Heart left ventricle (tissue), 16 donors: ENCODE measurements at regions of chrX and their contacts with region 1.

Region 1: GRCh38 chrX:120629667-120630537 is at the start of gene C1GALT1C1:
- DNase-seq: peak; percentile 91 to 96 (median 95)
- ATAC-seq: peak; percentile 98 to 99 (median 98)
- H3K4me3 ChIP-seq: peak within 1 kb of the TSS in 11 of 12 donors; percentile 58 to 89 (median 72)
- H3K27ac ChIP-seq: peak within 1 kb of the TSS; percentile 78 to 93 (median 88)
- H3K4me1 ChIP-seq: peaks cover 0 to 20% (median 2%) of the 10 kb centered on the region in 12 donors
- H3K27me3 ChIP-seq: no peaks in the 10 kb centered on the region
- CTCF ChIP-seq: no peak
- POLR2A ChIP-seq: peak in 1 of 2 donors; percentile 70
- total RNA-seq, gene C1GALT1C1: 14.7 to 25.5 (median 18.5) TPM

Region 2: DNA sequence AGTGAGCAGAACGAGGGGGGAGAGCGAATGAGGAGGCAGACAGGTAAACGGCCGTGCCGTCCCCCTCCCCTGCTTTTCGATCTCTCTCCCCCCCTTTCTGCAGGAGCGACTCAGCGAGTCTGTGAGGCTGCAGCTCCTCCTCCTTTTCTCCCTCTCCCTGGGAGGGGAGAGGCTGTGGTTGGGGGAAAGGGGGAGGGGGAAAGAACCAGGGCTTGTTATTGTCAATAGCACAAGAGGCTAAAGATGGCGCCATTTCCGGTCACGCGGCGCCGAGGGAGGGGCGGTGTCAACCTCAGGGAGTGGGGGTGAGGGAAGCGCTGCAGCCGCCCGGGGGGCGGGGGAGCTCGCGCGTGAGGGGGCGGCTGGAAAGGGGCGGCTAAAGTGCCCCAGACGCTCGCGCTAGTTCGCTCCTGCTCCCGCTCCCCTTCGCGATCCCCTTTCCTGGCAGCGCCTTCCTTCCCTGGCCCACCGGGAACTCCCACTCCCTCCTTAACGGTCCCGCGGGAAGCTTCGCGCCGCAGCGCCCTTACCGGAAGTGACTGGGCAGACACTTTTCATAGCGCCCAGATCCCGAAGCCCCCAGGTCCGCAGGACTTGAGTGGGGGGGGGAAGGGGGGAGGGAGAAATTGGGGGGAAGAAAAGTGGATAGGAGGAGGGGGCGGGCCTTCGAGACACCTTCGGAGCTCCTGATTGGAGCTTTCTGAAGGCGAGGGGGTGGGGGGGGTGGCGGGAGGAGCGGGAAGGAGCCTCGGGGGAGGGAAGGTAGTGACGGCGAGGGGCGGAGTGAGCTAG is 68.9 kb before region 1 on chrX and contains the start of gene CUL4B:
- intact Hi-C with region 1: loop called in 3 of 10 experiments (anchors 2 kb)
- DNase-seq: peak; percentile 92 to 94 (median 94)
- ATAC-seq: peak; percentile 94 to 96 (median 96)
- H3K4me3 ChIP-seq: peak within 1 kb of the TSS; percentile 42 to 94 (median 68)
- H3K27ac ChIP-seq: peak within 1 kb of the TSS; percentile 94 to 100 (median 97)
- H3K4me1 ChIP-seq: peaks cover 0 to 32% (median 10%) of the 10 kb centered on the region in 12 donors
- H3K27me3 ChIP-seq: no peaks in the 10 kb centered on the region
- CTCF ChIP-seq: no peak
- POLR2A ChIP-seq: peak in 1 of 2 donors; percentile 64
- total RNA-seq, gene CUL4B: 13.4 to 28.5 (median 19.7) TPM

Region 3: GRCh38 chrX:120603707-120604360 is 26.1 kb before region 1 on chrX and contains the start of gene MCTS1:
- intact Hi-C with region 1: loop called in 2 of 10 experiments (anchors 1 to 2 kb)
- DNase-seq: peak; percentile 78 to 87 (median 85)
- ATAC-seq: peak; percentile 95 to 97 (median 96)
- H3K4me3 ChIP-seq: peak within 1 kb of the TSS; percentile 18 to 82 (median 70)
- H3K27ac ChIP-seq: peak within 1 kb of the TSS; percentile 77 to 93 (median 86)
- H3K4me1 ChIP-seq: peaks cover 0 to 17% (median 8%) of the 10 kb centered on the region in 12 donors
- H3K27me3 ChIP-seq: no peaks in the 10 kb centered on the region
- CTCF ChIP-seq: no peak
- POLR2A ChIP-seq: peak in 1 of 2 donors; percentile 48
- total RNA-seq, gene MCTS1: 17.6 to 47.3 (median 34.1) TPM

Region 4: GRCh38 chrX:120672390-120672789 is 42.5 kb after region 1 on chrX:
- intact Hi-C with region 1: loop called in 1 of 10 experiments (anchors 2 kb)
- DNase-seq: peak in 4 of 5 donors; percentile 12 to 68 (median 28)
- ATAC-seq: peak; percentile 90 to 96 (median 93)
- H3K4me3 ChIP-seq: no peak overlapping the region
- H3K27ac ChIP-seq: peak overlapping the region; percentile 20 to 75 (median 56)
- H3K4me1 ChIP-seq: peaks cover 0 to 16% (median 8%) of the 10 kb centered on the region in 12 donors
- H3K27me3 ChIP-seq: no peaks in the 10 kb centered on the region
- CTCF ChIP-seq: no peak
- POLR2A ChIP-seq: no peak